Ovary (tissue), 10 donors: ENCODE measurements at regions of chr7 and their contacts with region 1.

Region 1: GRCh38 chr7:85554236-85555178 is 367.7 kb upstream of the SEMA3D start:
- DNase-seq: peak in 1 of 5 donors; percentile 18
- H3K4me3 ChIP-seq: no peak overlapping the region
- H3K27ac ChIP-seq: no peak overlapping the region
- H3K4me1 ChIP-seq: no peaks in the 10 kb centered on the region
- H3K27me3 ChIP-seq: no peaks in the 10 kb centered on the region
- CTCF ChIP-seq: peak in 1 of 3 donors; percentile 54
- EP300 ChIP-seq: no peak
- POLR2A ChIP-seq: no peak

Region 2: DNA sequence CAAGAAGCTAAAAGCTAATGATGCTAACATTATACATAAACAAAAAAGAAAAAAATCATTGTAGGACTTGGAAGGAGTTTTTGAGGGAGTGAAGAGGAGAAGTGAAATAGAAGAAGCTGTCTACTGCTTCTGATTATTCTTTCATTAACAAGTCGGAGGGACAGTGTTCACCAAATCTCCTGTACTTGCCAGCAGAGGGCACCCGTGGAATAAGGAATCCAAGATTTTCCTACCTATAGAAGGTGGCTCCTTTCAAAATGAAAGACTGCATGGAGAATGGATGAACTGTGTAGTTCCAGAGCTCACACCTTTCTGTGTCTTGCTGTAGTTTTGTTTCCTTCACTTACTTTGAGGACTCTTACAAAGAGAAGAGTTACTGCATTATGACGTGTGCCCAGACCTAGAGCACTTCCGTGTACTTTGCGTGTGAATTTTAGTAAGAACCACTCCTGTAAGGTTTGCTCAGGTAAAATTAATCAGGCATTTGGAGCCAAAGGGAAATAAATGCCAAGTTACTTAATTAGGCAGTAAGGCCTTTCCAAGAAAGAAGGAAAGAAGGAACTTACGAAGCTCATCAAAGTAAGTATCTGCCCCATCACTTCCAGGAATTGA is 512.8 kb before region 1 on chr7:
- intact Hi-C with region 1: loop called in 1 of 4 experiments (anchors 5 kb)
- DNase-seq: peak; percentile 42 to 75 (median 48)
- H3K4me3 ChIP-seq: no peak overlapping the region
- H3K27ac ChIP-seq: no peak overlapping the region
- H3K4me1 ChIP-seq: no peaks in the 10 kb centered on the region
- H3K27me3 ChIP-seq: no peaks in the 10 kb centered on the region
- CTCF ChIP-seq: peak in 2 of 3 donors; percentile 51 to 58
- EP300 ChIP-seq: no peak
- POLR2A ChIP-seq: no peak

Region 3: GRCh38 chr7:85498031-85498430 is 56.5 kb before region 1 on chr7:
- intact Hi-C with region 1: no loop called
- DNase-seq: no peak
- H3K4me3 ChIP-seq: no peak overlapping the region
- H3K27ac ChIP-seq: no peak overlapping the region
- H3K4me1 ChIP-seq: no peaks in the 10 kb centered on the region
- H3K27me3 ChIP-seq: no peaks in the 10 kb centered on the region
- CTCF ChIP-seq: no peak
- EP300 ChIP-seq: no peak
- POLR2A ChIP-seq: no peak

Region 4: DNA sequence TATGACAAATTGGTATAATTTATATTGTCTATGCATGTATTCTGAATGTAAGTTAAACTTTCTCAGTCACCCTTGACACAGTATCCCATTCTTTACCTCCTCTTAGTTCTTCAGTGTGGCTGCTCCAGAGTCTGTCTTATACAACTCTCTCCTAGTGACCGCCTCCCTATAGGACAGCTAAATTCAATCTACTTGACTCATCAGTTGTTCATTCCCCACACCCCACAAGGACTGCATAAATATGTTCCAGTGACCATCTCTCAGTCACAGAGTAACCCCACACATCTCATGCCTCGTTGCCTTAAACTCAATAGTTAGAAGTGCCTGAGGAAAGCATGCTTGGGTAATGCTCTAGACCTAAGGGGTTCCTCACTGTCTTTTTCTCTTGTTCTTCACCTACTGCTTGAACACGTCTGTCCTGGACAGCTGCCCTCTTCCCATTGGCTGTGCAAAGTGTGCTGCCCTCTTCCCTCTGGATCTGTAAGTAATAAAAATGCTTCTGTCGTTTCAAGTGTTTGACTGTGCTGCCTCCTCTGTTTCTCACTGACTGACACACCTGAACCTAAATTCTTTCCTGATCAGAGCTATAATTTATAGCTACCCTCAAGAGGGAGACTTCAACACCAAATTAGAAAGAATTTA is 594.6 kb after region 1 on chr7:
- intact Hi-C with region 1: no loop called
- DNase-seq: no peak
- H3K4me3 ChIP-seq: no peak overlapping the region
- H3K27ac ChIP-seq: no peak overlapping the region
- H3K4me1 ChIP-seq: no peaks in the 10 kb centered on the region
- H3K27me3 ChIP-seq: no peaks in the 10 kb centered on the region
- CTCF ChIP-seq: no peak
- EP300 ChIP-seq: no peak
- POLR2A ChIP-seq: no peak